A549 (cell line): ENCODE measurements at regions of chr6 and their contacts with region 1.

Region 1: DNA sequence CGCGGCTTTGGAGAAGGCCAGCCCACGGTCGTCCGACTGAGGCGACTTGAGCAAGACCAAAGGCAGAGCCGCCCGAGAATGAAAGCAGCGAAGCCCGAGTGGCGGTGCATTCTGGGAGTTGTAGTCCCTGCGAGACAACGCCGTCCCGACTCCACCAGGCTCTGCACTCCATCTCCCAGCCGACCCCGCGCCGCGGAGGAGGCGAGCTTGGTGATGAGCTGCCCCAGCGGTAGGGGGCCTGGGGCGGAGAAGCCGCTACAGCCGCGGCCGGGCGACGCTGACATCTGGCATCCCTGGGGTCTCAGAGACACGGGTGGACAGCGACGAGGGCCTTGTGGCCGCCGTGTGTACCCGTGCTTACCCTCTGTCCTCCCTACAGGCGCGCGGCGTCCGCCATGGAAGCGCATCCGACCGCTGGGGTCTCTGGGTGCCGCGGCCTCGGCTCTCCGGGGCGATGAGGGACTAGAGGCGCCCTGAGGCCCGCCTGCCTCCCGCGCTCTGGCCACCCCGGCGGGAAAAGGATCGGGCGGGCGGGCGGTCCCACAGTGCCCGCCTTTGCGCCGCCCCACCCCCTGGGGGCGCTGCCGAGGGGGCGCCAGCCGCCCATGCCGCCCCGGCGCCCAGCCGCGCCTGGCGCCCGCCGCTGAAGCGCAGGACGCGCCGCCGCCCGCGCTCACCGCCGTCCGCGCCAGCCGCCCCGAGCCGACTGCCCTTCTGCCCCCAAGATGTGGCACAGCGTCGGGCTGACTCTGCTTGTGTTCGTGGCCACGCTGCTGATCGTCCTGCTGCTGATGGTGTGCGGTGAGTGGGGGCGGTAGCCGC is at the start of gene SMIM13:
- DNase-seq: peak; percentile 92 to 97
- ATAC-seq: peak; percentile 96 to 97
- H3K4me3 ChIP-seq: peak within 1 kb of the TSS; percentile 84
- H3K27ac ChIP-seq: peak within 1 kb of the TSS; percentile 96 to 98
- H3K4me1 ChIP-seq: peaks cover 21% of the 10 kb centered on the region; the same call in 2 of the 3 replicates
- CTCF ChIP-seq: peak; percentile 63
- EP300 ChIP-seq: no peak
- POLR2A ChIP-seq: peak; percentile 51
- RAD21 ChIP-seq: no peak; a peak in 1 of 5 replicates
- polyA plus RNA-seq, gene SMIM13: 11.3 and 12.7 TPM in 2 replicates

Region 2: GRCh38 chr6:10749734-10750133 is 344.1 kb before region 1 on chr6:
- CTCF ChIA-PET with region 1: no interaction called
- POLR2A ChIA-PET with region 1: no interaction called
- DNase-seq: no peak
- ATAC-seq: no peak
- H3K4me3 ChIP-seq: no peak overlapping the region
- H3K27ac ChIP-seq: 0 out of 6 replicates have a peak overlapping the region, but pooled peaks of 1 of the 2 experiments have one; percentile 4
- H3K4me1 ChIP-seq: peaks cover 20% of the 10 kb centered on the region
- CTCF ChIP-seq: no peak
- EP300 ChIP-seq: no peak
- POLR2A ChIP-seq: no peak
- RAD21 ChIP-seq: no peak

Region 3: DNA sequence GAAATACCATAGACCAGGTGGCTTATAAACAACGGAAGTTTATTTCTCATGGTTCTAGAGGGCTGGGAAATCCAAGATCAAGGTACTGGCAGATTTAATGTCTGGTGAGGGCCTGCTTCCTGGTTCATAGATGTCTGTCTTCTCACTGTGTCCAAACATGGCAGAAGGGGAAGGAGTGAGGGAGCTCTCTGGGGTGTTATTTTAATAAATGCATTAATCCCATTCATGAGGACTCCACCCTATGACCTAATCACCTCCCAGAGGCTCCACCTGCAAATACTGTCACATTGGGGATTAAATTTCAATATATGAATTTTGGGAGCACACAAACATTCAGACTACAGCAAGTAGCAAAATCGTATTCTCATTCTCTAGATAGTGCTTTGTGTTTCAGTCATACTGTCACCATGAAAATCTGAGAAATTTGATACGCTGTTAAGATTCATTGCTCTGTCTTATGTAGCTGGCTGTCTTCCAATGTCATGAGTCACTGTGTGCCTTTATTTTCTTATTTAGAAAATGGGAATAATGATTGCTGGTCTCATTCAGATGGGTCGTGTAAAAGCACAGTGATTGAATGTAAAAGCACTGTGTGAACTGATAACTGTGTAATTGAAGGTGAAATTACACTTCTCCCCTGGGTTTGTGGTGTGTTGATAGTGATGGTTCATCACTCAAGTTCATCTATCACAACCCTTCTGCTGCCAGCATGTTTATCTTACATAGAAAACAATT is 26.6 kb after region 1 on chr6:
- CTCF ChIA-PET with region 1: interaction called, 11 read pairs
- POLR2A ChIA-PET with region 1: no interaction called
- DNase-seq: no peak
- ATAC-seq: peak; percentile 13 to 27; a peak in 3 of 6 replicates
- H3K4me3 ChIP-seq: no peak overlapping the region
- H3K27ac ChIP-seq: 0 out of 6 replicates have a peak overlapping the region, but pooled peaks of 1 of the 2 experiments have one; percentile 28
- H3K4me1 ChIP-seq: peaks cover 40% of the 10 kb centered on the region
- CTCF ChIP-seq: no peak
- EP300 ChIP-seq: no peak
- POLR2A ChIP-seq: no peak
- RAD21 ChIP-seq: no peak